Left colon (tissue), 2 donors: ENCODE measurements at regions of chr20 and their contacts with region 1.

Region 1: DNA sequence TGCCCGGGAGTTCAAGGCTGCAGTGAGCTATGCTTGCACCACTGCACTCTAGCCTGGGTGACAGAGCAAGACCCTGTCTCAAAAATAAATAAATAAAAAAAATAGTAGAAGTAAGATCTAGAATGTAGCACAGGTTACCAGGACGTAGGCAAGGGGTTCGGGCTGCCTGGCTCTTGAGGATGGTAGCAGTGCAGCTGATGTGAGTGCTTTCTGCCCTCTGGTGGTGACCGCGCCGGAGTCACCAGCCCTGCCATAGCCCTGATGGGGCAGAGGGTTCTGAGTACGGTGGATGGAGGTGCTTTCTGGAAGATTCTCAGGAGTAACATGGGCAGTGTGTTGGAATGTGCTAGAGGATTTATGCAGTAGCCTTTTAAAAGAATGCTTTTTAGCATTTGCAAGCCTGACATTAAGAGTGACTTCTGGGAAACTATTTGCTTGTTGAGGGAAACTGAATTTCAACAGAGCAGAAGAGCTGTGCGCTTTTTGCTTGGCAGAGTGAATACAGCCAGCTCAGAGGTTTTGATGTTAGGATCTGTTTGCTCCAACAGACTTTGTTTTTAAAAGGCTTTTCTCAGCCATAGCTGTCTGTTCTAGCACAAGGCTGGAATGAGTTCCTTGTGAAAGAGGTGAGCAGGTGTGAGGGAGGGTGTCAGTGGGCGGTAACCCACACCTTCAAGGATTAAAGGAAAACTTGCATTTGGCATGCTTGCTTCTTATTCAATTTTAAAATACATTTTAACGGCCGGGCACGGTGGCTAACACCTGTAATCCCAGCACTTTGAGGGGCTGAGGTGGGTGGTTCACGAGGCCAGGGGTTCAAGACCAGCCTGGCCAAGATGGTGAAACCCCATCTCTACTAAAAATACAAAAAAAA is 65.9 kb downstream of the PTPN1 start:
- DNase-seq: peak; percentile 65 to 86
- ATAC-seq: peak; percentile 60

Region 2: DNA sequence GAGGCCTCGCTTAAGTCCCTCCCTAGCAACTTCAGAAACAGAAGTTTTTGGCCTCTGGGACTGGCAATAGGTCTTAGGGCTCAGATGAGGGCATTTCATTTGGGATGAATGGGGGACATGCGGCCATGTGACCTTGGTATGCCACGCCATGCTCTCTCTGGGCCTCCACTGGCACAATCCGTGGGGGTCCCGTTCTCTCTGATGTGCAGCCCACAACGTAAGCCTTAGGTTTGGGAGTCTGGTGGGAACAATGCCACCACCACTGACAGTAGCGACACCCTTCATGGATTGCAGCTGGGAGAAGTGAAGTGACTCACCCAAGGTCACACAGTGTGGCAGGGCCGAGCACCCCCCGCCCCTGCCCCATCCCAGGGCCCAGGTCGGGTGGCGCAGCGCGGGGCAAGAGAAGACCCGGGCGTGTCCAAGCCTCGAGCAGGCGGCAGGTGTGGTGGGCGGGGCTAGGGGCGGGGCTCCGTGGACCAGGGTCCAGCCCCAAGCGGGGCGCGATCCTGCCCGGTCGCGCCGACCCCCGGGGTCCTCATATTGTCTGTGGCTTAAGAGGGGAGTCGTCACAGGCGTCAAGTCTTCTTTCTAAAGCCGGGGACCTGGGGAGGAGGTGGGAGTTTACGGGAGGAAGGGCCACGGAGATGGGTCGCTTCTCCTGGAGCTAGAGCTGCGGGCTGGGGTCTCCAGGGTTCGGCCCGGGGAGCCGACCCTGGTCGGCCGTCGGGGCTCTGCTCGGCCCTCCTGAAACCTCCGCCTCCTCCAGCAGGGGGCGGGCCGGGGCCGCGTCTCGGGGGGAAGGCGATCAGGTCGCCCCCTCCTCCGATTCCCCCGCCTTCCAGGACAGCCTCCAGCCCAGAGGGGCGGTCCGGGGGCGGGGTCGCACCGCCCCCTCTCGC is 386.2 kb before region 1 on chr20:
- intact Hi-C with region 1: loop called (anchors 5 to 10 kb)
- DNase-seq: peak; percentile 87 to 94
- ATAC-seq: peak; percentile 67

Region 3: DNA sequence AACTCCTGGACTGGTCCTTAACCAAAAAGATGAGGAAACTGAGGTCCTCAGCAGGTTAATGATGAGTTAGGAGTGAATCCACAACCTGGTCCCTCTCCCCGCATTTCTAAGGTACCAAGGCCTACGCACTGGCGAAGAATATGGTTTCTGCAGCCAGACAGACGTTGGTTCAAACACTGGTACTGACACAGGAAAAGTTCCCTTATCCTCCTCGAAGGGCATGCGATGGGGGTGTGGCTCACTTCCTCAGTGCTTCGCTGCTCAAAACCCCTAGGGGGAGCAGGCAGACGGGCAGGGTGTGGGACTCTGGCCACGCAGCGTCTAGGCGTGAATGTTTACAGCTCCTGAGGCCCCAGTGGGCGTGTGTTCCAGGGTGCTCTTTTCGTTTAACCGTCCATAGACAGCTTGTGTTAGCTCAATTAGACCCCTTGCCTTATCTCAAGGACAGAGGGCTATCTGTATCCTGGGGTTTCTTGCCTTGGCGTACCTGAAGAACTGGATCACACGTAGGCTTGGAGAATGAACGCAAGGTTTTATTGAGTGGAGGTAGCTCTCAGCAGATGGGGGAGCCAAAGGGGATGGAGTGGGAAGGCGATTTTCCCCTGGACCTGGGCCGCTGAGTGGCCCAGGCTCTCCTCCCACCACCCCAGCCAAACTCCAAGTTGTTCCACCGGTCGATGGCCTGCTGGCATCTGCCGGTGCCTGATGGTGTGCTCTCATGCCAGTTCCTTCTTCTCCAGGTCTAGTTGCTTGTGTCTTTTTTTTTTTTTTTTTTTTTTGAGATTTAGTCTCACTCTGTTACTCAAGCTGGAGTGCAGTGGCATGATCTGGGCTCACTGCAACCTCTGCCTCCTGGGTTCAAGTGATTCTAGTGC is 97.7 kb before region 1 on chr20:
- intact Hi-C with region 1: loop called (anchors 5 to 10 kb)
- DNase-seq: peak; percentile 79 to 81
- ATAC-seq: peak; percentile 78

Region 4: GRCh38 chr20:50484276-50484976 is 91.7 kb before region 1 on chr20:
- intact Hi-C with region 1: loop called (anchors 5 to 10 kb)
- DNase-seq: no peak
- ATAC-seq: peak; percentile 28

Region 5: DNA sequence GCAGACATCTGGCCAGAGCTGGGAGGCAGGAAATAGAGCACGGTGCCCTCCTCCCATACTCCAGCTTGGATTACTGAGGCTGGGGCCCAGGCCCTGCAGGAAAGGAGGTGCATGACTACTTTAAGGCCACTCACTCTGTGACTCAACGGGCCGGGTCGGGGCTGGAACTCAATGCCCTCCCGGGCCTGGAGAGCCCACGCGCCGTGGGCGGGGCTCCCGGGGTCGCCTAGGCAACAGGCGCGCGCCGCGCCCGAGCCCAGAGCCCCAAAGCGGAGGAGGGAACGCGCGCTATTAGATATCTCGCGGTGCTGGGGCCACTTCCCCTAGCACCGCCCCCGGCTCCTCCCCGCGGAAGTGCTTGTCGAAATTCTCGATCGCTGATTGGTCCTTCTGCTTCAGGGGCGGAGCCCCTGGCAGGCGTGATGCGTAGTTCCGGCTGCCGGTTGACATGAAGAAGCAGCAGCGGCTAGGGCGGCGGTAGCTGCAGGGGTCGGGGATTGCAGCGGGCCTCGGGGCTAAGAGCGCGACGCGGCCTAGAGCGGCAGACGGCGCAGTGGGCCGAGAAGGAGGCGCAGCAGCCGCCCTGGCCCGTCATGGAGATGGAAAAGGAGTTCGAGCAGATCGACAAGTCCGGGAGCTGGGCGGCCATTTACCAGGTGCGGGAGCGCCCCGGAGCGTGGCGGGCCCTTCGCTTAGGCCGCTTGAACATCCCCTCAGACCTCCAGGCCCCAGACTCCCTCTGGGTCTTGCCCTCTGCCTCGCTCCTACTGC is 66.0 kb before region 1 on chr20 and contains the start of gene PTPN1:
- intact Hi-C with region 1: loop called in 1 of 2 experiments (anchors 10 kb)
- DNase-seq: peak; percentile 99
- ATAC-seq: peak; percentile 96
- total RNA-seq, gene PTPN1: 31.3 to 33.9 TPM